Caco-2 (cell line): ENCODE measurements at regions of chr1 and their contacts with region 1.

Region 1: GRCh38 chr1:245843101-245843500 is 664.0 kb downstream of the SMYD3 start:
- DNase-seq: no peak
- H3K4me3 ChIP-seq: no peak overlapping the region
- H3K4me3 Mint-ChIP-seq: no peak overlapping the region
- H3K27ac Mint-ChIP-seq: no peak overlapping the region
- H3K4me1 ChIP-seq: no peaks in the 10 kb centered on the region
- H3K4me1 Mint-ChIP-seq: no peaks in the 10 kb centered on the region
- H3K27me3 ChIP-seq: no peaks in the 10 kb centered on the region
- H3K27me3 Mint-ChIP-seq: no peaks in the 10 kb centered on the region
- CTCF ChIP-seq: no peak

Region 2: DNA sequence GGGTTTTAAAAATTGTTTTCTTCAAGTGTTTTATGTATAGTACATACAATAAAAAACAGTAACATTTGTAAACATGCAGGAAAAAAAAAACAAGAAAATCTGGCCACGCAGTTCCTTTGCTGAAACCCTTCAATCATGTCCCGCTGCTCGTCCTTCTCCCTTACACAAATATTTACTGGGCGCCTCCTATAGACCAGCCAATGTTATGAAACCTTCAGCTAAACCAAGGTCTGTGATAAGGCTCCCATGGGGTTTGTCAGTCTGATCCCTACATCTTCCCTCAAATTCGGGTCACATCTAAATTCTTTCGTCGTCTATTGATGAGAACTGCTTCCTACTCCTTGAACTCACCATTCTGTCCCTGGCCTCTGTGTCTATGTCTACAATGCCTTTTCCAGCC is 80.1 kb after region 1 on chr1:
- CTCF ChIA-PET with region 1: no interaction called
- POLR2A ChIA-PET with region 1: no interaction called
- intact Hi-C with region 1: no loop called
- DNase-seq: no peak
- H3K4me3 ChIP-seq: no peak overlapping the region
- H3K4me3 Mint-ChIP-seq: no peak overlapping the region
- H3K27ac Mint-ChIP-seq: no peak overlapping the region
- H3K4me1 ChIP-seq: no peaks in the 10 kb centered on the region
- H3K4me1 Mint-ChIP-seq: no peaks in the 10 kb centered on the region
- H3K27me3 ChIP-seq: no peaks in the 10 kb centered on the region
- H3K27me3 Mint-ChIP-seq: no peaks in the 10 kb centered on the region
- CTCF ChIP-seq: peak in 1 of 2 experiments; percentile 2

Region 3: DNA sequence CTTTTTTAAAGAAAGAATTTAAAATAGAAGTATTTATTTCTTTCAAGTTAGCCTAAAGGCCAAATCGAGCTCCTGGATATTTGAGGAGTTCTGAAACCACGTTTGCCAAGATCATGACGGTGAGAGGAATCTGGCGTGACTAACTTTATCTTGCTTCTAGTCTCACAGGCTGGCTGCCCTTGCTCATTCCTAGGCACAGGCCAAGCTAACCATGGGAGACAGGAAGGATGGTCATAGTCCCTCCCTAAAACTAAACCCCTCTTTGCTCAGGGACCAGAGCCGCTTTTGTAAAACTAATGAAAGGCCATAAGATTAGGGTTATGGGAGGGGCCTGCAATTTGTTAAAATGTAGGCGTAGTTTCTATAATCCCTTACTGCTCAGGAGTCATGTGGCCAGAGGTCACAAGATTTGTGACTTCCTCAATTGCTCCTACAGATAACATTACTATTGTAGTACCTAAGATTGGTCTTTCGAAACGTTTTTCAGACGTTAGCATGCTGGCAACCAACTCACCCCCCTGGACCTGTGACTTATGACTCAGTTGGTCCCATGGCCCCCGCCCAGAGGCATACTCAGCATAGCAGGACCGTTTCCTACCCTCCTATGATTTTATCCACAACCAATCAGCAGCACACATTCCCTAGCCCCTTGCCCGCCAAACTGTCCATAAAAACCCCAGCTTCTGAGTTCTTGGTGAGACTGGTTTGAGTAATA is 238.9 kb after region 1 on chr1:
- CTCF ChIA-PET with region 1: no interaction called
- POLR2A ChIA-PET with region 1: interaction called, 10 read pairs
- intact Hi-C with region 1: no loop called
- DNase-seq: no peak
- H3K4me3 ChIP-seq: no peak overlapping the region
- H3K4me3 Mint-ChIP-seq: no peak overlapping the region
- H3K27ac Mint-ChIP-seq: no peak overlapping the region
- H3K4me1 ChIP-seq: peaks cover 20% of the 10 kb centered on the region
- H3K4me1 Mint-ChIP-seq: peaks cover 16% of the 10 kb centered on the region
- H3K27me3 ChIP-seq: no peaks in the 10 kb centered on the region
- H3K27me3 Mint-ChIP-seq: no peaks in the 10 kb centered on the region
- CTCF ChIP-seq: no peak